ENCODE measurements at regions of chr4 and their contacts with region 1.

Region 1: GRCh38 chr4:75432683-75433082 is 81.5 kb downstream of the RCHY1 start:
- DNase-seq: peak; percentile 27
- ATAC-seq: peak; percentile 99
- H3K4me3 Mint-ChIP-seq: no peak overlapping the region
- H3K27ac Mint-ChIP-seq: no peak overlapping the region
- H3K4me1 Mint-ChIP-seq: peaks cover 4% of the 10 kb centered on the region; the same call in 1 of the 2 replicates
- H3K27me3 Mint-ChIP-seq: no peaks in the 10 kb centered on the region
- CTCF ChIP-seq: peak; percentile 31; the same call in 1 of the 2 replicates

Region 2: GRCh38 chr4:75321484-75321883 is 111.2 kb before region 1 on chr4:
- CTCF ChIA-PET with region 1: no interaction called
- POLR2A ChIA-PET with region 1: no interaction called
- DNase-seq: no peak
- ATAC-seq: no peak
- H3K4me3 Mint-ChIP-seq: no peak overlapping the region
- H3K27ac Mint-ChIP-seq: no peak overlapping the region
- H3K4me1 Mint-ChIP-seq: peaks cover 18% of the 10 kb centered on the region
- H3K27me3 Mint-ChIP-seq: peaks cover 3% of the 10 kb centered on the region; the same call in 1 of the 2 replicates
- CTCF ChIP-seq: no peak

Region 3: GRCh38 chr4:75469896-75470295 is 37.2 kb after region 1 on chr4:
- CTCF ChIA-PET with region 1: interaction called, 24 read pairs
- POLR2A ChIA-PET with region 1: no interaction called
- DNase-seq: no peak
- ATAC-seq: no peak
- H3K4me3 Mint-ChIP-seq: no peak overlapping the region
- H3K27ac Mint-ChIP-seq: no peak overlapping the region
- H3K4me1 Mint-ChIP-seq: no peaks in the 10 kb centered on the region
- H3K27me3 Mint-ChIP-seq: no peaks in the 10 kb centered on the region
- CTCF ChIP-seq: no peak

Region 4: GRCh38 chr4:75490155-75490554 is 57.5 kb after region 1 on chr4:
- CTCF ChIA-PET with region 1: interaction called, 11 read pairs
- POLR2A ChIA-PET with region 1: no interaction called
- DNase-seq: no peak
- ATAC-seq: no peak
- H3K4me3 Mint-ChIP-seq: no peak overlapping the region
- H3K27ac Mint-ChIP-seq: no peak overlapping the region
- H3K4me1 Mint-ChIP-seq: peaks cover 7% of the 10 kb centered on the region
- H3K27me3 Mint-ChIP-seq: no peaks in the 10 kb centered on the region
- CTCF ChIP-seq: no peak

Measured in WTC11 (cell line).